Right ventricle myocardium superior (tissue), 1 donor: ENCODE measurements at regions of chr9 and their contacts with region 1.

Region 1: DNA sequence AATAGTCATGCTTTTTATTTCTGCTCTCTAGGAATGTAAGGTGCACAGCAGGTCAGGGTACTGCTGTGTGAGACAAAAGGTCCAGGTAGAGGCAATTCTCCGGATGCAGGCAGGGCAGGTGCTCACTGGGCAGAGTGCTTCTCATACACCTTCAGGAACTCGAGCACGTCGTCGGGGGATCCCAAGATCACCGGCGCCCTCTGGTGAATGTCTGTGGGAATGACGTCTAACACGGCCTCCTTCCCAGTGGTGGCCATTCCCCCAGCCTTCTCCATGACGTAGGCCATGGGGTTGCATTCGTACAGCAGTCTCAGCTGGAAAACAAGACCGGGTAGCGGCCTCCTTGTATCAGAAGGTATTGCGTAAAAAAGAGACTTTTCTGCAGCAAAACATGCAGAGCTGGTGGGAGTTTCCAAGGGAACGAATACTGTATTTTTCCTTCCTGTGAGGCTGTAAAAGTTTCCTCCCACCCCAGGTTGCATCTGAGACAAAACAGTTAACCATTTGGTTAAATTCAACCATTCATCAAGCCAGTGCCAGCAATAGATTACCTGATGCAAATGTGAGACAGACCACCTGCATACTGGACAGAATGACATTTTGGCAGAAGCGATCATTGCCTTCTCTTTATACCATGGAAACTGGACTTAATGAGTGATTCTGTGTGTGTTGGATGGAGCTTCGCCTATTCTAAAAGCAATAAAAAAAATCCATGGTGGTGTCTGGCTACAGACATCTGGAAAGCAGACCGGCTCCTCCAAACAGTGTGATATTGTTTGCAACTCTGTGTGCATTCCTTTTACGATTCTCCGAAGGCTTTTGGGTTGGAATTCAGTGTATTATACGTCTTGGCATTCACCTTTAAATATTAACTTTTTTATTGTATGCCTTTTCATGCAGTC is 9.9 kb upstream of the FBP2 start:
- DNase-seq: peak; percentile 73
- ATAC-seq: peak; percentile 81

Region 2: DNA sequence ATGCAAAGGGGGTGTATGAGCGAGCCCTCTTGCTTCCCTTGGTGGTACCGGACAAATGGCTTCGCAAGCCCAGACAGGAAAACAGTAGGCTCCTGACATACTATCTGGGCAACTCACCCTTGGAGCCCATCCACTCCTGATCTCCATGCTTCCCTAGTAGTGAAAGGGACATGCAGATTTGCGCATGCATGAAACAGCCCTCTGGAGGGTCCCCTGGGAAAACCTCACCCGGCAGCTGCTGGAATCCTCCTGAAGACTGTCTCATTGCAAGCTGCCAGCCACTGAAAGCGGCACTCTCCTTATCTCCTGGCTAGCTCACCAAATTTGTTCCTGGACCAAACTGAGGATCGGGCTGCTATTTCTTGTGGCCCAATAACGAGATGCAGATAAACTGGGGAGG is 334.2 kb before region 1 on chr9:
- intact Hi-C with region 1: loop called (anchors 10 kb)
- DNase-seq: no peak
- ATAC-seq: peak; percentile 57

Region 3: DNA sequence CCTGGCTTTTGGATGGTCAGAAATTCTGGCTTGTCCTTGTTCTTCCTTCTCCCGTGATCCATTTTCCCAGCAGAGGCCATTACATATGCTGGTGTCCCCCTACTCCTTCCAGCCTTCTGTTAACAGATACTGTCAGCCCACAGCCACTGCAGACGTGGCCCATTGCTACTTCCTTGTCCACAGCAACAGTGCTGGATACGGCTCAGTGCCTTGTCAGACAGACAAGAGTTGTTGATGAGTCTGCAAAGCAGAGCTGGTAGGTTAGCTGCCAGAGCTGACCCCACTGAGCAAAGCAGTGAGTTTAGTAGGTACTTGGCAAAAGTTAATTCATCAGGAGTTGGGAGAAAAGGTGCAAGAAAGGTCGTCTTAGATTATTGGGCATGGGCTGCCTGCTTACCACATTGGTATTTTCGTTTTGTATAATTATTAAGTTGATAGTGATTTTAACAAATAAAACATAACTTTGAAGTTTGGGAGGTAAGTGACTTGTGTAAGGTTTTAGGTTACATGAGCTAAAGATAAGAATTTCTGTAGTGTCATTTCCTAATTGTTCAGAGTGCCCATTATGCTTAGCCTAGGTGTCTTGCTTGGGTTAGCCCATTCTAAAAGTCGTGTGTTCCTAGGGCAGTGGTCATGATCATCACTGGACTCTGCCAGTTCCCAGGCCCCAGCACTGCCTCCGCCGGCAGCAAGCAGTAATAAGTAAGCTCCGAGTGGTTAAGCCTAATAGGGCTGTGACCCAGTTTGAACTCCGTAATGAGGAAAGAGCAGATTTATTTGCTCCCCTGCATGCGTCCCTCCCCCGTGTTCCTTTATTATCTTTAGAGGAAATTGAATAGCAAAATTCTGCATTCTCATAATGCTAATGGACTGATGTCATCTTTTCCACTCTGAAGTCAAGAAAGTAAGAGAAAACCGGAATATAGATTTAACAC is 422.0 kb after region 1 on chr9:
- intact Hi-C with region 1: no loop called
- DNase-seq: peak; percentile 76
- ATAC-seq: peak; percentile 73